ENCODE measurements at regions of chr11 and their contacts with region 1.

Region 1: GRCh38 chr11:363948-364761 is 5.1 kb upstream of the B4GALNT4 start:
- DNase-seq: peak; percentile 74
- H3K4me3 ChIP-seq: no peak overlapping the region
- H3K27ac ChIP-seq: no peak overlapping the region
- H3K4me1 ChIP-seq: no peaks in the 10 kb centered on the region
- CTCF ChIP-seq: peak; percentile 82

Region 2: DNA sequence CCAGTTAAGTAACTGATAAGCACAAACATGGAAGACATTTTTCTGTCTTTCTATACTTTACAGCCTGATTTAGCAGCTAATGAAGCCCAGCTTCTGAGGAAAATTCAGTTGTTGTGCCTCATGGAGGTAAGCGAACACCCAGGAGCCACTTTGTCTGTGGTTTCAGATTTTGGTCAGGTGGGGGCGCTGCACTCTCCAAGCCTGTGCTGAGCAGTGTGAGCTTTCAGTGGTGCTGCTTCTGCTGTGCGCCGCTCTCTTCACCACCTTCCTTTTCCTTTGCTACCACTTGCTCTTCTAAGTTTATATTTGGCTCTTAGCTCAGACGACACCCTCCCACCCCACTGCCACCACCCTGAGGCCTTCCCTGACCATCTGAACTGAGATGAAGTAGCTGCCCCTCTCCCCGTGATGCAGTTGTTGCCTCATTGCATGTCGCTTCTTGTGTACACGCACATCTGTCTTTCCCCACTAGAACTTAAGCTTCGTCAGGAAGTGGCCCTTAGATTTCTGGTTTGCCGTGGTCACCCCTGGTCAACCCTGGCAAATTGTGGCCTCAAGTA is 113.3 kb before region 1 on chr11:
- CTCF ChIA-PET with region 1: interaction called, 5 read pairs
- POLR2A ChIA-PET with region 1: interaction called, 3 read pairs
- intact Hi-C with region 1: loop called (anchors 2 kb)
- DNase-seq: peak; percentile 60
- H3K4me3 ChIP-seq: no peak overlapping the region
- H3K27ac ChIP-seq: no peak overlapping the region
- H3K4me1 ChIP-seq: no peaks in the 10 kb centered on the region
- CTCF ChIP-seq: peak; percentile 91

Region 3: DNA sequence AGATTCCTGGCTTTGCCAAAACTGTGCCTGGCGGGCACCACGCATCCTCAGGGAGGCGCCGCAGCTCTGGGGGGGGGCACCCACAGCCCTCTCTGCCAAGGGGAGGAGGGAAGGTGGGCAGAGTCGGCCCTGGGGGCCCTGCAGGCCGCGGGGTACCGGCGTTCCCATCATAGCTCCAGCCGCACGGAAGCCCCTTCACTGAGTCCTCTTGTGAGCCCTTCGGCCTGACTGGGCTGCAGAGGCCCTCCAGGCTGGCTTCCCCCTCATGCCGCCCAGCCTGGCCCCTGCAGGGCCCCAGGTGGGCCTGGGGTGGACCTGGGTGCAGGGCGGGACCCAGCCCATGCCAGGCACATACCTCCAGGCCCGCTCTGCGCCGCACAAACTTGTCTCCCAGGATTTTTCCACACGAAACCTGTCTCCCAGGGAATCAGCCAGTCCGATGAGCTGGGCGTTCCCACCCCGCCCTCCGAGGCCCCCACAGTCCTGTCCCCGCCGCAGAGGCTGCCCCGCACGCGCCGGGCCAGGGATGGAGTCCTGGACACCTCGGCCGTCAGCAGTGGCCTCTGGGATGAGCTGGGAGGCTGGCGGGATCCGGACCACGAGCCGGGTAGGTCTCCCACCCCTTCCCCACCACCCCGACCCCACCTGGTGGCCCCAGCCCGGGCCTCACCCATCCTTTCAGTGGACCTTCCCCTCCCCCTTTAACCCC is 28.1 kb after region 1 on chr11:
- CTCF ChIA-PET with region 1: interaction called, 10 read pairs
- POLR2A ChIA-PET with region 1: no interaction called
- intact Hi-C with region 1: no loop called
- DNase-seq: no peak
- H3K4me3 ChIP-seq: no peak overlapping the region
- H3K27ac ChIP-seq: no peak overlapping the region
- H3K4me1 ChIP-seq: no peaks in the 10 kb centered on the region
- CTCF ChIP-seq: no peak